RWPE1 (cell line): ENCODE measurements at regions of chr1 and their contacts with region 1.

Region 1: GRCh38 chr1:205273551-205273982 is 45.8 kb downstream of the TMCC2 start:
- DNase-seq: peak; percentile 96
- H3K27ac ChIP-seq: peak overlapping the region; percentile 90
- CTCF ChIP-seq: peak; percentile 97

Region 2: DNA sequence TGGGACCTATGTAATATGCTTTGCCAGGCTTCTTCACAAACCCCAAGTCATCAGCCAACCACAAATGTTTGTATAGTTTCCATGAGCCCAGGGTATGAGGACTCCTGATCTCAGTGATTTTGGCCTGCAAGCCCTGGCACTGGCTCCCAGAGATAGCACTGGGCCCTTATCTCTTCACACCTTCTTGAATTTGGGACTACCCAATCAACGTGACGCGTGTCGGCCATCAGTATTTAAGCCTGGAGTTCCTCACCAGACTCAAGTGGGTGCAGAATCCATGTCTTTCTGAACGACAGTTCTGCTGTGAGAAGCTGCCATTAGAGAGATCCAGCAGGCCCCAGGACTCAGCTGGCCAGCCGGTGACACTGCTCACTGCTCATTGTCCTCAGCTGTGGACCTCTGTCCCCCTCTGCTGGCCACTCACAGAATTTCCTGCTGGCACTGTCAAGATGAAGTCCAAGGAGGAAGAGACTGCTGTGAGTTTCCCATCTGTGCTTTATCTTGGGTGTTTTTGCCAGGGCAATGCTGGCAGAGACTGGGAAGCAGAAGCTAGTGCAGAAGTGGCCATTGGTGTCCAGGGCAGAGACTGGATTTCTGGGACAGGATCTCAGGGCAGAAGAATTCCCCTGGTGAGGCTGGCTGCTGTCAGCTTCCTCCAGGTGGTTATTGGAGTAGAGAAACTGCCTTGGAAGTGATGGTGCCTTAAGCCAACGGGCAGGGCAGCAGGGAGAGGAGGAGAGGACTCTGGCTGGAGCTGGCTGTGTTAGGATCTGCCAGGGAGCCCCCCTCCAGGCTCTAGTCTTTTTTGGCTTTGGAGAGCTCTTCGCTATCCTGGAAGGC is 17.4 kb before region 1 on chr1:
- CTCF ChIA-PET with region 1: interaction called, 48 read pairs
- POLR2A ChIA-PET with region 1: no interaction called
- DNase-seq: peak; percentile 88
- H3K27ac ChIP-seq: peak overlapping the region; percentile 51
- CTCF ChIP-seq: peak; percentile 94

Region 3: DNA sequence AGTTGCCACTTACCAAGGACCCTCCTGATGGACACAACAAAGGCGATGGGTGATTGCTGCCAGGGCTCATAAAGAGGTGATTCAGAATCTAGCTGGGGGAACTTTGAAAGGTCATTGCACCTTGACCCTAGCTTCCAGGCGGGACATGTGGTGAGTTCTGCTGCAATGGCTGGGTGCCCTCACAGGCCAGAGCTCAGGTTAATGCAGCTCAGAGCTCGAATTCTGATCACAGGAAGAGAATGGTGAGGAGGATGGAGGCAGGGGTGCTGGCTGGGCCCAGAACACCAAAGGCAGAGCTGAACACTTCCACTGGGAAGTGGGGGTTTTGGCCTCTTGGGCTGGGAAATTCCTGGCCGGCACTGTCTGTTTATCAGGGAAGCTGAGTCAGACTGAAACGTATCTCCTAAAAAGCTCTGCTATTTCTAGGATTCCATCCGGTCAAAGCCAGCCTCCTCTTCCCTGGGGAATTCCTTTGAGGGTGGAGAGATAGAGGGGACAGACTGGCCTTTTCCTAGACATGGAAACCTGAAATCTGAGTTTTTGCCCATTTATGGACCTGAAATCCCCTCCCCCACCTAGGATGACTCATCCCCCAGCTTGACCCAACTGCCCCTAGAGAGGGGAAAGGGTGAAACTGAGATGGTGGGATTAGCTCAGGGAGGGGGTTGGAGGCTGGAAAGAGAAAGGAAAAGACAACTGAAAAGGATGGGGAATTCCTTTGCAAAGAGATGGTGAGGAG is 20.8 kb after region 1 on chr1:
- CTCF ChIA-PET with region 1: interaction called, 23 read pairs
- POLR2A ChIA-PET with region 1: no interaction called
- DNase-seq: peak; percentile 85
- H3K27ac ChIP-seq: peak overlapping the region; percentile 85
- CTCF ChIP-seq: no peak

Region 4: GRCh38 chr1:205313563-205314308 is 40.2 kb after region 1 on chr1:
- CTCF ChIA-PET with region 1: interaction called, 622 read pairs
- POLR2A ChIA-PET with region 1: interaction called, 26 read pairs
- DNase-seq: no peak
- H3K27ac ChIP-seq: peak overlapping the region; percentile 48
- CTCF ChIP-seq: no peak

Region 5: DNA sequence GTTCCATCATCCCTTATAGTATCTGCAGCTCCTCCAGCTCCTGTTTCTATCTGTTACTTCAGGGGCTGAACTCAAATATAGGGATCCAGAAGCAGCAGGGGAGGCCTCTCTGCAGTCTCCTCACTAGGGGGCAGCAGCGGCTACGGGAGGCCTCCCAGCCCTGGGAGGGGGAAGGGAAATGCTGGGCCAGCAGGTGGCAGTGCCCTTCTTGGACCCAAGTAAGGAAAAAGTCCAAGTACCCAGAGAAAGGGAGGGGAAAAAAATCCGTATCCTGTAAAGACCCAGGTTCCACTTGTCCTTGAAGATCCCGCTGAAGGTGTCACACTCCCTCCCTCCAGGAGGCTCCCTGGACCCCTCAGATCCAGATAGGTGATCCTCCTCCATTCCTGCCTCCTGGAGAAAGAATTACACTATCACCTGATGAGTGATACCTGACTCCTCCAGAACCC is 62.1 kb after region 1 on chr1:
- CTCF ChIA-PET with region 1: interaction called, 622 read pairs
- POLR2A ChIA-PET with region 1: no interaction called
- DNase-seq: peak; percentile 90
- H3K27ac ChIP-seq: no peak overlapping the region
- CTCF ChIP-seq: peak; percentile 90

Region 6: GRCh38 chr1:205523891-205524793 is 250.6 kb after region 1 on chr1:
- CTCF ChIA-PET with region 1: interaction called, 10 read pairs
- POLR2A ChIA-PET with region 1: no interaction called
- DNase-seq: peak; percentile 91
- H3K27ac ChIP-seq: peak overlapping the region; percentile 19; the same call in 1 of the 2 replicates
- CTCF ChIP-seq: peak; percentile 75